CD4-positive, alpha-beta memory T cell (primary cell): ENCODE measurements at regions of chr3 and their contacts with region 1.

Region 1: GRCh38 chr3:14402304-14402811 is at the start of gene SLC6A6:
- DNase-seq: peak; percentile 93 to 96 (median 95)
- H3K4me3 ChIP-seq: peak within 1 kb of the TSS; percentile 62 to 100
- H3K4me3 Mint-ChIP-seq: peak within 1 kb of the TSS; percentile 96 to 100 (median 97)
- H3K27ac ChIP-seq: peak within 1 kb of the TSS; percentile 83
- H3K27ac Mint-ChIP-seq: peak within 1 kb of the TSS; percentile 96 to 100 (median 98)
- H3K4me1 ChIP-seq: peaks cover 51% of the 10 kb centered on the region
- H3K4me1 Mint-ChIP-seq: peaks cover 31 to 70% (median 45%) of the 10 kb centered on the region in 4 donors
- H3K27me3 ChIP-seq: no peaks in the 10 kb centered on the region
- H3K27me3 Mint-ChIP-seq: no peaks in the 10 kb centered on the region
- total RNA-seq, gene SLC6A6: 50.6 to 51.8 TPM

Region 2: GRCh38 chr3:13543251-13543650 is 859.1 kb before region 1 on chr3:
- CTCF ChIA-PET with region 1: no interaction called
- POLR2A ChIA-PET with region 1: no interaction called
- intact Hi-C with region 1: no loop called
- DNase-seq: no peak
- H3K4me3 ChIP-seq: no peak overlapping the region
- H3K4me3 Mint-ChIP-seq: no peak overlapping the region
- H3K27ac ChIP-seq: no peak overlapping the region
- H3K27ac Mint-ChIP-seq: no peak overlapping the region
- H3K4me1 ChIP-seq: peaks cover 11% of the 10 kb centered on the region
- H3K4me1 Mint-ChIP-seq: peaks cover 12 to 30% (median 18%) of the 10 kb centered on the region in 4 donors
- H3K27me3 ChIP-seq: no peaks in the 10 kb centered on the region
- H3K27me3 Mint-ChIP-seq: peaks cover 16 to 43% of the 10 kb centered on the region in 2 donors

Region 3: GRCh38 chr3:14124615-14125190 is 277.7 kb before region 1 on chr3 and contains the starts of genes CHCHD4 and TMEM43:
- CTCF ChIA-PET with region 1: no interaction called
- POLR2A ChIA-PET with region 1: interaction called, 9 read pairs
- intact Hi-C with region 1: loop called (anchors 2 kb)
- DNase-seq: peak; percentile 97 to 99 (median 99)
- H3K4me3 ChIP-seq: peak within 1 kb of the TSS; percentile 53 to 78
- H3K4me3 Mint-ChIP-seq: peak within 1 kb of the TSS; percentile 95 to 98 (median 96)
- H3K27ac ChIP-seq: peak within 1 kb of the TSS; percentile 89
- H3K27ac Mint-ChIP-seq: peak within 1 kb of the TSS; percentile 96 to 97 (median 97)
- H3K4me1 ChIP-seq: peaks cover 38% of the 10 kb centered on the region
- H3K4me1 Mint-ChIP-seq: peaks cover 38 to 64% (median 54%) of the 10 kb centered on the region in 4 donors
- H3K27me3 ChIP-seq: no peaks in the 10 kb centered on the region
- H3K27me3 Mint-ChIP-seq: no peaks in the 10 kb centered on the region
- total RNA-seq, gene CHCHD4: 7.5 to 9.3 TPM
- total RNA-seq, gene TMEM43: 69.3 to 69.7 TPM

Region 4: GRCh38 chr3:14377348-14378169 is 24.8 kb before region 1 on chr3:
- CTCF ChIA-PET with region 1: no interaction called
- POLR2A ChIA-PET with region 1: interaction called, 14 read pairs
- intact Hi-C with region 1: no loop called
- DNase-seq: peak; percentile 14 to 49 (median 26)
- H3K4me3 ChIP-seq: no peak overlapping the region
- H3K4me3 Mint-ChIP-seq: peak overlapping the region in 7 of 8 donors; percentile 43 to 80 (median 53)
- H3K27ac ChIP-seq: no peak overlapping the region
- H3K27ac Mint-ChIP-seq: peak overlapping the region; percentile 72 to 92 (median 87)
- H3K4me1 ChIP-seq: peaks cover 22% of the 10 kb centered on the region
- H3K4me1 Mint-ChIP-seq: peaks cover 15 to 30% (median 21%) of the 10 kb centered on the region in 4 donors
- H3K27me3 ChIP-seq: no peaks in the 10 kb centered on the region
- H3K27me3 Mint-ChIP-seq: no peaks in the 10 kb centered on the region

Region 5: DNA sequence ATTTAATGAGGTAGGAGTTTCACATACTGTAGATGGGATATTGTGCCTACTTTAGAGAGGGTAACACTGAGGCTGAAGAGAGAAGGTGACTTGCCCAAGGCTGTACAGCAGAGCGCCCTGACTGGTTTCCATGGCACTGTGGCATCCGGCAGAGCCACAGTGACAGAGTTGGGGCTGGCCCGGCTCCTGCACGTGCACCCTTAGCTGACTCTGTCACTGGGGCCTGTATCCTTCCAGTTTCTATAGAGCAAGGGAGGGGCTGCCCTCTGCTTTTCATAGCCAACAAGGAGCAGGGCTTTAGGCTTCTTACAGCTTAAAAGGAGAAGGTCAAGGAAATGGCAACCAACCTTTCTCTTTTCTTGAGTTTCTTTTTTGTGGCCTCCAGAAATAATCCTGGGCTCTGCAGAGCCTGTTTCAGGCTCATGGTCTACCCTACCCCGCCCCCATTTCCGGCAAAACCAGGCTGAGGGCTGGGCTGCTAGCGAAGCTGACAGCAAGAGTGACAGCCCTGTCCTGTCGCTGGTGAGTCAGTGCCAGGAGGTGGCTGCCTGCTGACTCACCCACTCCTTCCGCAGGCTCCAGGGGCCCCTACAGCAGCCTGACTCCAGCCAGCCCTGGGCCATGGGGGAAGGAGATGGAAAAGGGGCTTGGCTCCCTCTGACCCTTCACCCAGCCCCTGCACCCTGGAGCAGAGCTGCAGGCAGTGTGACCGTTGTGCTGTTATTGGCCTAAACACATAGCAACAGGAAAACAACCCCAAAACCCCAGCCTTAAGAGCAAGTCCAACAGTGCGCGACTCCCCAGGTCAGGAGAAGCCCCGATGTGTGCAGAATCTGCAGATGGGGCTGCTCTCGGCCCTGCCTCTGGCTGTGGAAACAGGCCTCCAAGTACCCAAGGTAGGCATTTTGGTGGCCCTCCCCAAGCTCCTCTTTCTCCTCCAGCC is 29.8 kb after region 1 on chr3:
- CTCF ChIA-PET with region 1: interaction called, 52 read pairs
- POLR2A ChIA-PET with region 1: interaction called, 394 read pairs
- intact Hi-C with region 1: loop called (anchors 1 kb)
- DNase-seq: peak; percentile 93 to 99 (median 94)
- H3K4me3 ChIP-seq: peak overlapping the region; percentile 55 to 77
- H3K4me3 Mint-ChIP-seq: peak overlapping the region; percentile 77 to 93 (median 80)
- H3K27ac ChIP-seq: peak overlapping the region; percentile 98
- H3K27ac Mint-ChIP-seq: peak overlapping the region; percentile 97 to 100 (median 100)
- H3K4me1 ChIP-seq: peaks cover 97% of the 10 kb centered on the region
- H3K4me1 Mint-ChIP-seq: peaks cover 64 to 98% (median 87%) of the 10 kb centered on the region in 4 donors
- H3K27me3 ChIP-seq: no peaks in the 10 kb centered on the region
- H3K27me3 Mint-ChIP-seq: no peaks in the 10 kb centered on the region

Region 6: GRCh38 chr3:14467814-14468620 is 65.7 kb after region 1 on chr3:
- CTCF ChIA-PET with region 1: interaction called, 124 read pairs
- POLR2A ChIA-PET with region 1: interaction called, 10 read pairs
- intact Hi-C with region 1: loop called (anchors 1 kb)
- DNase-seq: peak in 4 of 5 donors; percentile 26 to 42 (median 36)
- H3K4me3 ChIP-seq: no peak overlapping the region
- H3K4me3 Mint-ChIP-seq: no peak overlapping the region
- H3K27ac ChIP-seq: no peak overlapping the region
- H3K27ac Mint-ChIP-seq: peak overlapping the region in 4 of 7 donors; percentile 36 to 81 (median 54)
- H3K4me1 ChIP-seq: no peaks in the 10 kb centered on the region
- H3K4me1 Mint-ChIP-seq: peaks cover 0 to 2% (median 0%) of the 10 kb centered on the region in 4 donors
- H3K27me3 ChIP-seq: no peaks in the 10 kb centered on the region
- H3K27me3 Mint-ChIP-seq: no peaks in the 10 kb centered on the region

Region 7: GRCh38 chr3:15098503-15099363 is 696.4 kb after region 1 on chr3 and contains the start of gene RBSN:
- CTCF ChIA-PET with region 1: no interaction called
- POLR2A ChIA-PET with region 1: no interaction called
- intact Hi-C with region 1: loop called (anchors 2 kb)
- DNase-seq: peak; percentile 96 to 98 (median 96)
- H3K4me3 ChIP-seq: peak within 1 kb of the TSS; percentile 61 to 73
- H3K4me3 Mint-ChIP-seq: peak within 1 kb of the TSS; percentile 88 to 99 (median 96)
- H3K27ac ChIP-seq: peak within 1 kb of the TSS; percentile 95
- H3K27ac Mint-ChIP-seq: peak within 1 kb of the TSS; percentile 89 to 99 (median 99)
- H3K4me1 ChIP-seq: peaks cover 22% of the 10 kb centered on the region
- H3K4me1 Mint-ChIP-seq: peaks cover 19 to 35% (median 27%) of the 10 kb centered on the region in 4 donors
- H3K27me3 ChIP-seq: no peaks in the 10 kb centered on the region
- H3K27me3 Mint-ChIP-seq: peaks cover 1 to 2% of the 10 kb centered on the region in 2 donors
- total RNA-seq, gene RBSN: 33.2 to 34.7 TPM